Right ventricle myocardium superior (tissue), 1 donor: ENCODE measurements at regions of chr3 and their contacts with region 1.

Region 1: GRCh38 chr3:148955544-148956346 is 35.6 kb upstream of the GYG1 start:
- DNase-seq: no peak
- ATAC-seq: peak; percentile 92

Region 2: DNA sequence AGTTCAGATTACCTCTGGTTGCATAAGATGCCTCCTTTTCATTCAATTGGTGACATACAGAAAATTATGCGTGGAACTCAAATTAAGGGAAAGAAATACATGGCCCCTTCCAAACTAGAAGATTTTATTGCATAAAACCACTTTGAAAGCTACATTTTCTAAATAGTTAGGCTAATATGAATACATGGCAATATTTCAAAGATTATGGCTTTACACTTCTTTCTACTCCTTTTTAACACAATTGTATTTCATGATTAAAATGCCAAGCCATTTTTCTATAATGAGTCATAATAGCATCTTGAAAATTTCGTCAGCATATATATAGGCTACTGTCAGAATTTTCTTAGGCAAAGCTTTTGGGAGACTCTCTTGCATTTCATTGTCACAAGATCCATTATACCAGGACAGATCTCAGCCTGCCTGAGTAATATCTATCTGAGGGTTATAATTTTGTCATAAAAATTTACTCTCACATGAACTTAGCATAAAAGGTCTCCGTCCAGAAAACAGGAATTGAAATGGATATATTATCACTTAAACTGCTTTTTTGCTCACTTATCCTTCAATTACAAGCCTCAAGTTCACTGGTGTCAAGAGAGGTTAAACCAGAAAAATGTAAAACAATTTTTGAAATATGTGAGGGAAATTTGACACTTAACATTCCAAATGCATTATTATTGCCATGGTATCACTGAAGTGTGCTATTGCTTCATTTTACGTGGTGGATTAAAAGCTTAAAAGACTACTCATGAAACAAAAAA is 53.5 kb before region 1 on chr3:
- intact Hi-C with region 1: no loop called
- DNase-seq: no peak
- ATAC-seq: no peak

Region 3: DNA sequence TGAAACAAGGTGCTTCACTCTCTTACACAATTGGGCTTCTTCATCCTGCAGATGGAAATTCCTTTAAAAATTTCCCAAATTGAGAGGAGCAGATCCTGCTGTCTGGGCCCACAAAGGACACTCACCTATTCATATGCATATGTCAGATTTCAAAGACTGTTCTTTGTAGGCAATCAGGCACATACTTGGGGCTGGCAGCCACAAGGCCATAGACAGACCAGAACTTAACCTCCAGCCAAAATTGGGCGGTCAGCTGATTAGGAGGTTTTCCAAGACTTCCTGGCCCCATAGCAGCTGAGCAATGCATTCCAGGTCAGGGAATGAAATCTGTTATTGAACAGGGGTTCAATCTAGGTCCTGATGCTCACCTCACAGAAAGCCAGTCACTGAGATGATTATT is 158.7 kb after region 1 on chr3:
- intact Hi-C with region 1: loop called (anchors 10 kb)
- DNase-seq: no peak
- ATAC-seq: peak; percentile 67